Posterior vena cava (tissue), 2 donors: ENCODE measurements at regions of chr1 and their contacts with region 1.

Region 1: GRCh38 chr1:203486618-203487370 is 7.2 kb upstream of the OPTC start:
- DNase-seq: no peak

Region 2: DNA sequence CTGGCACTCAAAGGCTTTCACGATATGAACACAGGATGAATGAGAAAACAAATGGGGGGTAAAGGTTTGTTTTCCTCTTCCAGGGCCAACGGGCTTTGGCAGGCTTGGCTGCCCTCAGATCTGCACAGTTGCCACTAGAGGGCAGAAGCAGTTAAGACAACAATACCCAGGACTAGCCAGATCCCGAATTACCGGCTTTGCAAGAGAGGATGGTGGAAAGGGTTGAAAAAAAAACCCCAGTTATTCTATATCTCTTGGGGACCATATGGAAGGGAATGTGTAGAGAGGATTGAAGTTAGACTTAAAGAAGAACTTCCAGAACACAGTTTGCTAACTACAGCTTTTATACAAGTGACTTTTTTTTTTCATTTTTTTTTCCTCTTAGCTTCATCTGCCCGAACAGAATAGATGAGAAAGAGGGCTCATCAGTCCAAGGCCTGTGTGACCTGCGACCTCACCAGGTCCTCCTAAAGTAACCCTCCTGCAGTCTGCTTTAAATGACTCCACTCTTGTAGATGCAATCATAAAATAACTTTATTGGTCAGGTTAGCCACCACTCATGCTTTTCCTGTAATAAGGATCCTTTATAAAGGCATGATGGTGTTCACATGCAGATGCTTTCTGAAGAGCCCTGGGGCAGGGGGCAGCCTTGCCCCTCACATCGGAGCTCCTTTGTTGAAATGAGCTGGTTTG is 146.5 kb before region 1 on chr1:
- intact Hi-C with region 1: loop called (anchors 2 kb)
- DNase-seq: no peak

Region 3: GRCh38 chr1:203368624-203369451 is 118.0 kb before region 1 on chr1:
- intact Hi-C with region 1: loop called in 1 of 2 experiments (anchors 5 kb)
- DNase-seq: peak; percentile 87

Region 4: DNA sequence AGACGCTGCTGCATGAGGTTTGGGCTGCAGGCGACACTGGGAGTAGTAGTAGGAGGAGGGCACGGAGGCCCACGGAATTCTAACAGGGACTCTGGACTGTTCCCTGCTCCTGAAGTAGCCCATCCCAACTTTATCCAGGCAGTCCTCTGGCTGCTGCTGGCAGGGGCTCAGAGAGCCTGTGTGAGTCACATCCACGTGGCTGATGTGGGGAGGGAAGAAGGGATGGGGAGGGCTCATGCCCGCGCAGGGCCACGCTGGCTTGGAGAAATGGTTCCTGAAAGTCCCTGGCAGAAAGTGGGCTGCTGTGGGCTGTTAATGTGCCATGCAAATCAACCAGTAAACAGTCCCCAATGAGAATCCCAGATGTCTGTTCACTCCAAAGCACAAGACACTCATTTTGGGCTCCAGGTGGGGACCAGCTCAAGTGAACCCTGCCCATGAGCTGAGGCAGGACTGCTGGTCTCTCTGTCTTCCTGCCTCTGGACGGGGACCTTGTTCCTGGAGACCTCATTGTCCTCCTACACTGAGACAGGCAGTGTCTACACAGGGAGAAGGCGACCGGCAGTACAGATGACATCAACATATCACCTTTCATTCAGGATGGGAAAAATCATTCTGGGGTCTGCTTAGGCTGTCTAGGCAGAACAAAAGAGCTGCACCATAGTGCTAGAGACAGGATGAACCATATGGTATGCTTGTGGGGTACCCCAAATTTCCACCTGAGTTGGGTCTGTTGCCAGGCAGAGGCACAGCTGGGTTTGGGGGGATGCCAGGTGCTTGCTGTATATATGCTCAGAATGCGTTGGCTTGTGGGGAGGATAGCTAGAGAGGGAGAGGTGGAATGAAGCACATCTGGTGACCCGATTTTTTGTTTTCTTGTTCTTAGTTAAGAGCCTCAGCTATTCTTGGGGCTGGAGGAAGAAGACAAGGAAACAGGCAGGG is 78.0 kb before region 1 on chr1:
- intact Hi-C with region 1: loop called in 1 of 2 experiments (anchors 5 kb)
- DNase-seq: peak; percentile 96

Region 5: DNA sequence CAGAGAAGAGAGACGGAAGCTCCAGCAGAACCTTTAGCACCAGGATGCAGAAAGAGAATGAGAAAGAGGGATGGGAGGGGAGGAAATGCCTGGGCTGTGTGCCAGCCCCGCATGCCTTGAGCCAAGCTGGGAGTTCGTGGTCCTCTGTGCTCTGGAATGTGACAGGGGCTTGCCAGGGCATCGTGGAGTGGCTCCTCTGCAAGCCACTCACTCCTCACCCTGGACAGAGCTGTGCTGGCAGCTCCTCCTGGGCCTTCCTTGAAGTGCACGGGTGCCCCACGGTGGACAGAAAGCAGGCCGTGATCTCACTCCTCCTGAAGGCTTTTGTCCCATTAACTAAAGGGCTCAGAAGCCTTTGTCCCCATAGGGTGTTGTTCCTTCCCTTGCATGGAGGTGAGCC is 46.0 kb before region 1 on chr1:
- intact Hi-C with region 1: loop called in 1 of 2 experiments (anchors 5 kb)
- DNase-seq: peak; percentile 92

Region 6: GRCh38 chr1:203609979-203610493 is 123.2 kb after region 1 on chr1:
- intact Hi-C with region 1: no loop called
- DNase-seq: no peak